Activated CD4-positive, alpha-beta T cell treated with anti-CD3 and anti-CD28 coated beads for 36 hours (primary cell): ENCODE measurements at regions of chr12 and their contacts with region 1.

Region 1: DNA sequence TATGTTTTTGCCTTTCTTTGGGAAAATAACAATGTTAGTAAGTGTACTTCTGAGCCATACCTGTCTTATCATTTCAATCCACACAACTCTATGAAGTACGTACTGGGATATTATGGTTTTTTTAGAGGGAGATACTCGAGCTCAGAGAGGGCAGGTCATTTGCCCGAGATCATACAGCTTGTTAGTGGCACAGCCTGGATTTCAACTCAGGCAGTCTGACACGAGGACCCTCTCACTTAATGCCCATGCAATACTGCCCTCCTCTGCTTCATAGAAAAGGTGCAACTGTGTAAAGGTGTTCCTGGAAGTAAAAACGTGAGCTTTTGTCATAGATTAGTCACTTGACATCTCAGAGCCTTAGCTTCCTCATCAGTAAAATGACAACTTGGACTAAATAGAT is 128.0 kb downstream of the NDUFA12 start:
- DNase-seq: peak; percentile 33
- ATAC-seq: peak; percentile 80
- H3K4me3 Mint-ChIP-seq: no peak overlapping the region
- H3K27ac Mint-ChIP-seq: no peak overlapping the region
- H3K4me1 Mint-ChIP-seq: peaks cover 19% of the 10 kb centered on the region
- H3K27me3 Mint-ChIP-seq: peaks cover 54% of the 10 kb centered on the region

Region 2: GRCh38 chr12:94140556-94140955 is 735.0 kb before region 1 on chr12:
- CTCF ChIA-PET with region 1: no interaction called
- POLR2A ChIA-PET with region 1: no interaction called
- intact Hi-C with region 1: loop called in 1 of 2 experiments (anchors 2 kb)
- DNase-seq: peak; percentile 79
- ATAC-seq: peak; percentile 81
- H3K4me3 Mint-ChIP-seq: no peak overlapping the region
- H3K27ac Mint-ChIP-seq: no peak overlapping the region
- H3K4me1 Mint-ChIP-seq: no peaks in the 10 kb centered on the region
- H3K27me3 Mint-ChIP-seq: no peaks in the 10 kb centered on the region

Region 3: GRCh38 chr12:94545935-94546771 is 329.4 kb before region 1 on chr12:
- CTCF ChIA-PET with region 1: no interaction called
- POLR2A ChIA-PET with region 1: no interaction called
- intact Hi-C with region 1: loop called in 1 of 2 experiments (anchors 1 kb)
- DNase-seq: peak; percentile 31
- ATAC-seq: peak; percentile 61
- H3K4me3 Mint-ChIP-seq: no peak overlapping the region
- H3K27ac Mint-ChIP-seq: no peak overlapping the region
- H3K4me1 Mint-ChIP-seq: no peaks in the 10 kb centered on the region
- H3K27me3 Mint-ChIP-seq: no peaks in the 10 kb centered on the region

Region 4: DNA sequence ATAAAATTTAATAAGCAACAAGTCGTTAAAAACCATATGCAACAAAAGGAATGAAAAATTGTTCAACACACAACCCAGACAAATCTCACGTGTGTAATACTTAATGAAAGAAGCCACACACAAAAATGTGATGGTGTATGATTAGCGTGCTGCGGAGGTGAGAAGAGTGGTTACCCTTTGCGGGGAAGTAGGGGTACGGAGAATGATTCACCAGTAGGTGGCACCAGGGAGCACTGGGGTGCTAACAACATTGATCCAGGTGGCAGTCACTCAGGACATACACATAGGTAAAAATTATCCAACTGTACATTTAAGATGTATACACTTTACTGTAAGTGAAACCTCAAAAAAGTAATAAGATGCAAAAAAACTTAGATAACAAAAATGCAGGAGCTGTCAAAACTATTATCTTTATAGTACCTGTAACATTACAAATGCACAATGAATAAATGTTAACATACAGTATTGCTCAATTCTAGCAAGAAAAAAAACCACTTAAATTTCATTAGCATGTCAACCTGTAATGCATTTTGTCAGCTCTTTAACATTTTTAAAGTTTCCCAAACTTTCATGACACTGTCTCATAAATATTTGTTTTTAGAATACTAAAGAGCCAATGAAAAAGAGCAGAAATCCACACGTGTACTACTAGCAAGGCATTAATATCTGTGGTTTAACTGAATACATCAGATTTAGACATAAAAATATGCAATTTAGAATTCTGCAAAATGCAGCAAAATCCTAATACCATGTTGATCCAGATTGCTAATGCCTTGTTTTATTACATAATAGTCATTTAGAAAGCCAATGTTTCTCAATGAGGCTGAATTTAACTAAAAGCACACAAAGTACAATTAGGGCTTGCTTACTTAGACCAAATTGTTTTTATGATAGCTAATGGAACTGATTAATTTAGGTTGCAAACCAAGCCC is 271.8 kb before region 1 on chr12:
- CTCF ChIA-PET with region 1: no interaction called
- POLR2A ChIA-PET with region 1: no interaction called
- intact Hi-C with region 1: loop called in 1 of 2 experiments (anchors 2 kb)
- DNase-seq: peak; percentile 76
- ATAC-seq: peak; percentile 55
- H3K4me3 Mint-ChIP-seq: no peak overlapping the region
- H3K27ac Mint-ChIP-seq: no peak overlapping the region
- H3K4me1 Mint-ChIP-seq: no peaks in the 10 kb centered on the region
- H3K27me3 Mint-ChIP-seq: peaks cover 16% of the 10 kb centered on the region

Region 5: GRCh38 chr12:94710933-94711332 is 164.6 kb before region 1 on chr12:
- CTCF ChIA-PET with region 1: no interaction called
- POLR2A ChIA-PET with region 1: no interaction called
- intact Hi-C with region 1: loop called in 1 of 2 experiments (anchors 1 kb)
- DNase-seq: peak; percentile 51
- ATAC-seq: no peak
- H3K4me3 Mint-ChIP-seq: no peak overlapping the region
- H3K27ac Mint-ChIP-seq: no peak overlapping the region
- H3K4me1 Mint-ChIP-seq: peaks cover 6% of the 10 kb centered on the region
- H3K27me3 Mint-ChIP-seq: peaks cover 2% of the 10 kb centered on the region

Region 6: GRCh38 chr12:94762259-94762942 is 113.1 kb before region 1 on chr12:
- CTCF ChIA-PET with region 1: no interaction called
- POLR2A ChIA-PET with region 1: no interaction called
- intact Hi-C with region 1: loop called in 1 of 2 experiments (anchors 5 kb)
- DNase-seq: no peak
- ATAC-seq: peak; percentile 54
- H3K4me3 Mint-ChIP-seq: no peak overlapping the region
- H3K27ac Mint-ChIP-seq: no peak overlapping the region
- H3K4me1 Mint-ChIP-seq: peaks cover 5% of the 10 kb centered on the region
- H3K27me3 Mint-ChIP-seq: no peaks in the 10 kb centered on the region

Region 7: GRCh38 chr12:94980577-94980976 is 105.1 kb after region 1 on chr12:
- CTCF ChIA-PET with region 1: no interaction called
- POLR2A ChIA-PET with region 1: no interaction called
- intact Hi-C with region 1: loop called in 1 of 2 experiments (anchors 5 kb)
- DNase-seq: no peak
- ATAC-seq: peak; percentile 64
- H3K4me3 Mint-ChIP-seq: no peak overlapping the region
- H3K27ac Mint-ChIP-seq: no peak overlapping the region
- H3K4me1 Mint-ChIP-seq: peaks cover 51% of the 10 kb centered on the region
- H3K27me3 Mint-ChIP-seq: no peaks in the 10 kb centered on the region

Region 8: GRCh38 chr12:95083938-95084337 is 208.4 kb after region 1 on chr12:
- CTCF ChIA-PET with region 1: no interaction called
- POLR2A ChIA-PET with region 1: no interaction called
- intact Hi-C with region 1: no loop called
- DNase-seq: no peak
- ATAC-seq: no peak
- H3K4me3 Mint-ChIP-seq: no peak overlapping the region
- H3K27ac Mint-ChIP-seq: no peak overlapping the region
- H3K4me1 Mint-ChIP-seq: peaks cover 4% of the 10 kb centered on the region
- H3K27me3 Mint-ChIP-seq: no peaks in the 10 kb centered on the region